ENCODE measurements at regions of chr3 and their contacts with region 1.

Region 1: GRCh38 chr3:71226565-71227269 is 356.8 kb downstream of the FOXP1 start:
- DNase-seq: peak; percentile 81
- H3K4me3 Mint-ChIP-seq: peak overlapping the region; percentile 79
- H3K27ac Mint-ChIP-seq: peak overlapping the region; percentile 91
- H3K4me1 Mint-ChIP-seq: peaks cover 29% of the 10 kb centered on the region
- H3K27me3 Mint-ChIP-seq: peaks cover 48% of the 10 kb centered on the region

Region 2: GRCh38 chr3:70550723-70551319 is 675.9 kb before region 1 on chr3:
- intact Hi-C with region 1: loop called (anchors 10 kb)
- DNase-seq: peak; percentile 34
- H3K4me3 Mint-ChIP-seq: no peak overlapping the region
- H3K27ac Mint-ChIP-seq: no peak overlapping the region
- H3K4me1 Mint-ChIP-seq: no peaks in the 10 kb centered on the region
- H3K27me3 Mint-ChIP-seq: peaks cover 17% of the 10 kb centered on the region

Region 3: GRCh38 chr3:71064288-71064955 is 162.3 kb before region 1 on chr3:
- intact Hi-C with region 1: loop called (anchors 1 kb)
- DNase-seq: peak; percentile 59
- H3K4me3 Mint-ChIP-seq: no peak overlapping the region
- H3K27ac Mint-ChIP-seq: no peak overlapping the region
- H3K4me1 Mint-ChIP-seq: peaks cover 39% of the 10 kb centered on the region
- H3K27me3 Mint-ChIP-seq: no peaks in the 10 kb centered on the region

Region 4: GRCh38 chr3:71149959-71150954 is 76.5 kb before region 1 on chr3:
- intact Hi-C with region 1: loop called (anchors 2 kb)
- DNase-seq: no peak
- H3K4me3 Mint-ChIP-seq: no peak overlapping the region
- H3K27ac Mint-ChIP-seq: peak overlapping the region; percentile 57
- H3K4me1 Mint-ChIP-seq: peaks cover 13% of the 10 kb centered on the region
- H3K27me3 Mint-ChIP-seq: peaks cover 28% of the 10 kb centered on the region

Region 5: DNA sequence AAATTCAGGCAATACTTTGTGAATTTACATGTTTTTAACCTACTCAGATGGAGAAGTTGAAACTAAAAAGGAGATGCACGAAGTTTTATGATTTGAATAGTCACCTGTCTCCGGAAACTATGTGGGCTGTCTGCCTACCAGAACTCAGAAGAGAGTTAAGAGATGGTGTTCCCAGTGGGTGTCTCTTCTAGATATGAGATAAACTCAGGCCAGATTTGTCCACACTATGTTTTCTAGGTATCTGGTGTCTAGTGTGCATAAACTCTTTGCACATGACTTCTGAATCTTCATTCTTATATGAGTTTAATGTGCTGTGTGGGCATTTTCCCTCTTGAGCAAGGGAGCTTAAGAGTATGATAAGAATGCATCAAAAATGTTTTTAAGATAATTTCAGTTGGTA is 134.0 kb after region 1 on chr3:
- intact Hi-C with region 1: loop called (anchors 1 kb)
- DNase-seq: no peak
- H3K4me3 Mint-ChIP-seq: no peak overlapping the region
- H3K27ac Mint-ChIP-seq: peak overlapping the region; percentile 80
- H3K4me1 Mint-ChIP-seq: peaks cover 19% of the 10 kb centered on the region
- H3K27me3 Mint-ChIP-seq: peaks cover 25% of the 10 kb centered on the region

Region 6: DNA sequence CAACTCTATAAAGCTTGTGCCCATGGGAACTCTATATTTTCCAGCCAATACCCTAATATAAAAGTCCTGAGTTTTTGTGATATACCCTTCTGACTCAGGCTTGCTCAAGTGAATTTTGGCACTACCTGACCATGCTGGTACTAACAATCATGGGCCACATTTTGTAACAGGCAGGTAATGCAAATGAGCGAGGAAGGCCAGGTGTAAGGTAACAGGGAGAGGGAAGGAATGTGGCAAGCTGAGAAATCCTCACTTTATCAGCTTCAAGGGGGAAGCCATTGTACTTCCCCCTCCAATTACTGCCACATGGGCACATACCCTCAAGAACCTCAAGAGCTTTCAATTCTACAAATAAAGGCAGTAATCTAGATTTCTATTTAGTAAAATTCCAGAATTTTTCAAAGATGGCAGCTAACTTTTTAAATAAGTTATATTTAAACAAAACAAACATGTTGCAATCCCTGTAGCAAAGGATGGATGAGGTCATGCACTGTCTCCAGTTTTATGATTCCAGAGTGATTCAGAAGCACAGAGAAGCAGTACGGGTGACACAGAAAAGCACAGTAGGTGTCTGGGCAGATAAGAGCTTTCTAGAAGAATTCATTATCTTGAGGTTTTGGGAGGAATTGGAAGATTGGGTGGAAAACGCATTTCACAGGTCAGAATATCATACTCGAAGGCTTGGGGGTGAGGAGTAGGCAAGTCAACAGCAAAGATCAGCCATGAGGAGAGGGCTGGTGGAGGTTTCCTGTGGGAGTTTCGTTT is 269.2 kb after region 1 on chr3:
- intact Hi-C with region 1: loop called (anchors 2 kb)
- DNase-seq: peak; percentile 4
- H3K4me3 Mint-ChIP-seq: peak overlapping the region; percentile 22
- H3K27ac Mint-ChIP-seq: peak overlapping the region; percentile 40
- H3K4me1 Mint-ChIP-seq: peaks cover 57% of the 10 kb centered on the region
- H3K27me3 Mint-ChIP-seq: peaks cover 6% of the 10 kb centered on the region

Region 7: GRCh38 chr3:71998995-71999673 is 772.4 kb after region 1 on chr3:
- intact Hi-C with region 1: no loop called
- DNase-seq: no peak
- H3K4me3 Mint-ChIP-seq: no peak overlapping the region
- H3K27ac Mint-ChIP-seq: peak overlapping the region; percentile 63
- H3K4me1 Mint-ChIP-seq: peaks cover 44% of the 10 kb centered on the region
- H3K27me3 Mint-ChIP-seq: no peaks in the 10 kb centered on the region